Caco-2 (cell line): ENCODE measurements at regions of chr3 and their contacts with region 1.

Region 1: GRCh38 chr3:30258426-30259392 is 347.7 kb upstream of the TGFBR2 start:
- DNase-seq: peak; percentile 89 to 93
- H3K4me3 ChIP-seq: no peak overlapping the region
- H3K4me3 Mint-ChIP-seq: peak overlapping the region; percentile 12
- H3K27ac Mint-ChIP-seq: peak overlapping the region; percentile 12
- H3K4me1 ChIP-seq: peaks cover 57% of the 10 kb centered on the region
- H3K4me1 Mint-ChIP-seq: peaks cover 36% of the 10 kb centered on the region
- H3K27me3 ChIP-seq: no peaks in the 10 kb centered on the region
- H3K27me3 Mint-ChIP-seq: no peaks in the 10 kb centered on the region
- CTCF ChIP-seq: no peak

Region 2: DNA sequence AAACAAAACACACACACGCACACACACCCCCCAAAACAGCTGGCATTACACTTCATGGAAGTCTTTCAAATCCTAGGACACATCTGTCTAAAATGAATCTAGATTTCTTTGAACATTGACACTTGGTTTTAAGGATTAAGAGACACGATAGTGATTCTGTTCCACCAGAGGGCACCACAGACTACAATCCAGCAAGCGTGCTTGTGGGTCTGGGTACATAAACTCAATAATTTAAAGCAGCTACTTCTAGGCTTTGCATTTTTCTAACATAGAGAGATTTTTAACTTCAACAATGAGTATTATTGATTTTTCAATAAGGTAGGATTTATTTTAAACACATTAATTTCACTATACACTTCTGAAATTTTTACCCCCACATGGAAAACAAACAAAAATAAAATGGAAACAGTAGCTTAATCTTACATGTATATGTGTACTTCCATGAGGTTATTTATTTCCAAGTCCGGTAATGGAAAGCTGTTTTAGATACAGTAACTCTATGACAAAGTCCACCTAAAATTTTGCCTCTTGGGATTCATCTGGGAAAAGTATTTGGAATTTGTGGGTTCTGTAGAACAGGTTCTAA is 216.3 kb before region 1 on chr3:
- CTCF ChIA-PET with region 1: no interaction called
- POLR2A ChIA-PET with region 1: no interaction called
- intact Hi-C with region 1: loop called (anchors 5 kb)
- DNase-seq: peak; percentile 69 to 72
- H3K4me3 ChIP-seq: no peak overlapping the region
- H3K4me3 Mint-ChIP-seq: no peak overlapping the region
- H3K27ac Mint-ChIP-seq: no peak overlapping the region
- H3K4me1 ChIP-seq: peaks cover 10% of the 10 kb centered on the region; the same call in 1 of the 2 replicates
- H3K4me1 Mint-ChIP-seq: no peaks in the 10 kb centered on the region
- H3K27me3 ChIP-seq: no peaks in the 10 kb centered on the region
- H3K27me3 Mint-ChIP-seq: no peaks in the 10 kb centered on the region
- CTCF ChIP-seq: peak; percentile 76 to 86

Region 3: GRCh38 chr3:30227571-30228301 is 31.0 kb before region 1 on chr3:
- CTCF ChIA-PET with region 1: interaction called, 3 read pairs
- POLR2A ChIA-PET with region 1: no interaction called
- intact Hi-C with region 1: loop called (anchors 1 kb)
- DNase-seq: peak in 1 of 2 experiments; percentile 60
- H3K4me3 ChIP-seq: no peak overlapping the region
- H3K4me3 Mint-ChIP-seq: peak overlapping the region; percentile 47
- H3K27ac Mint-ChIP-seq: peak overlapping the region; percentile 85
- H3K4me1 ChIP-seq: peaks cover 33% of the 10 kb centered on the region
- H3K4me1 Mint-ChIP-seq: peaks cover 20% of the 10 kb centered on the region
- H3K27me3 ChIP-seq: no peaks in the 10 kb centered on the region
- H3K27me3 Mint-ChIP-seq: no peaks in the 10 kb centered on the region
- CTCF ChIP-seq: no peak

Region 4: DNA sequence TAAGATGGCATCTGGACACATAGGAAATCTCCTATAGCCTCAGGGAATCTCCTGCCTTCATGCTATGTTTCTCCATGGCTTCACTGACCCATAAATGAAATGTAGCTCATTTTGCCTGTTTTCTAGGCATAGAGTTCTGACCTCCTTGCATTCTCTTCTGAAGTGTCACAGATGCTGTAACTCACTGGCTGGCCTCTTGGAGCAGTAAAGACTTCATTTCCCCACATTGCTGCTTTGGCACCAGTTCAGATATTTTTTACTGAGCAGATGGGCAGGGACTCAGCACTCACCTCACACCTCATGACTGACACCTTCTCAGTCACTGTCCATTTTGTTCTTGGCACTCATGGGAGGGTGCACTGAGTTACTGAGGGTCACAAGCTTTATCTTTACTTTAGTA is 61.0 kb after region 1 on chr3:
- CTCF ChIA-PET with region 1: interaction called, 3 read pairs
- POLR2A ChIA-PET with region 1: no interaction called
- intact Hi-C with region 1: loop called (anchors 2 kb)
- DNase-seq: peak; percentile 40 to 60
- H3K4me3 ChIP-seq: no peak overlapping the region
- H3K4me3 Mint-ChIP-seq: no peak overlapping the region
- H3K27ac Mint-ChIP-seq: no peak overlapping the region
- H3K4me1 ChIP-seq: peaks cover 5% of the 10 kb centered on the region
- H3K4me1 Mint-ChIP-seq: peaks cover 8% of the 10 kb centered on the region
- H3K27me3 ChIP-seq: no peaks in the 10 kb centered on the region
- H3K27me3 Mint-ChIP-seq: no peaks in the 10 kb centered on the region
- CTCF ChIP-seq: peak; percentile 15 to 51

Region 5: GRCh38 chr3:30437171-30437601 is 178.5 kb after region 1 on chr3:
- CTCF ChIA-PET with region 1: no interaction called
- POLR2A ChIA-PET with region 1: no interaction called
- intact Hi-C with region 1: loop called (anchors 1 kb)
- DNase-seq: no peak
- H3K4me3 ChIP-seq: no peak overlapping the region
- H3K4me3 Mint-ChIP-seq: no peak overlapping the region
- H3K27ac Mint-ChIP-seq: no peak overlapping the region
- H3K4me1 ChIP-seq: peaks cover 16% of the 10 kb centered on the region
- H3K4me1 Mint-ChIP-seq: peaks cover 21% of the 10 kb centered on the region
- H3K27me3 ChIP-seq: no peaks in the 10 kb centered on the region
- H3K27me3 Mint-ChIP-seq: no peaks in the 10 kb centered on the region
- CTCF ChIP-seq: no peak

Region 6: DNA sequence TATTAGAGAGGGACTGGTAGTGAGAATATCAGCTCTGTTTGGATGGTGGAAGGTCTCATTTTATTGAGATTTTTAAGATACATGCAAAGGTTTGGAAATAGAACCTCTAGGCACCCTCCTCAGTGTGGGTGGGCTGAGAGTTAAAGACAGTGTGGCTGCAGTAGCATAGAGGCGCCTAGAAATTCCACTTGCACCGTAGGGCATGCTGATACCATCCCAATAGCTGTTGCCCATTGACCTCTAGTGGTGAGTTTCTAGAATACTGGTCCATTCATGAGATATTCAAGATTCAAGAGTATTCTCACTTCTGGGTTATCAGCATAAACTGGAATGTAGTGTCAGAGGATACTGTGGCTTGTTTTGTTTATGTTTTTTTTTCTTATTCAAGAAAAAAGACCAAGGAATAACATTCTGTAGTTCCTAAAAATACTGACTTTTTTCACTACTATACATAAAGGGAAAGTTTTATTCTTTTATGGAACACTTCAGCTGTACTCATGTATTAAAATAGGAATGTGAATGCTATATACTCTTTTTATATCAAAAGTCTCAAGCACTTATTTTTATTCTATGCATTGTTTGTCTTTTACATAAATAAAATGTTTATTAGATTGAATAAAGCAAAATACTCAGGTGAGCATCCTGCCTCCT is 434.9 kb after region 1 on chr3:
- CTCF ChIA-PET with region 1: no interaction called
- POLR2A ChIA-PET with region 1: no interaction called
- intact Hi-C with region 1: loop called (anchors 1 kb)
- DNase-seq: peak in 1 of 2 experiments; percentile 65
- H3K4me3 ChIP-seq: no peak overlapping the region
- H3K4me3 Mint-ChIP-seq: no peak overlapping the region
- H3K27ac Mint-ChIP-seq: no peak overlapping the region
- H3K4me1 ChIP-seq: peaks cover 31% of the 10 kb centered on the region
- H3K4me1 Mint-ChIP-seq: peaks cover 40% of the 10 kb centered on the region
- H3K27me3 ChIP-seq: no peaks in the 10 kb centered on the region
- H3K27me3 Mint-ChIP-seq: no peaks in the 10 kb centered on the region
- CTCF ChIP-seq: peak; percentile 77 to 79